ENCODE measurements at regions of chr1 and their contacts with region 1.

Region 1: DNA sequence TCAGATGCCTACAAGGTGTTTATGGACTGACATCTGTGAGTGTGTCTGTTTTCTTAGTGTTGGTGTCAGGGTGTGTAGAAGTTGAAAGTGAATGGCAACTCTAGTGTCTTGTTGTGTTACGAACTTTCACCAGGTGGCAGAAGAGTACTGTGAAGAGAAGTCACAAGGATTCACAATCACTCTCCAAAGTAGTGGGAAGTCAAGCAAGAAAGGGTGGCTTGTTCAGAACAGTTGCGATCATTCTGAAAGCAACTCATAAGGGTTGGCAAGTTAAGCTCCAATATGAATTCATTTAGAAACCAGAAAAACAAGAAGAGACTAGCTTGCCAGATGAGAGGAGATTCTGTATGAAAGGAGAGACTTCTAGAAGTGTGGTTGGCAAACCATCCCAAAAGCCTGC is 86.1 kb downstream of the FASLG start:
- DNase-seq: no peak
- ATAC-seq: peak in 3 of 4 donors; percentile 57 to 80 (median 64)
- H3K4me3 ChIP-seq: no peak overlapping the region
- H3K27ac ChIP-seq: no peak overlapping the region
- H3K4me1 ChIP-seq: no peaks in the 10 kb centered on the region
- H3K27me3 ChIP-seq: peaks cover 0 to 3% (median 0%) of the 10 kb centered on the region in 3 donors
- CTCF ChIP-seq: peak; percentile 36

Region 2: DNA sequence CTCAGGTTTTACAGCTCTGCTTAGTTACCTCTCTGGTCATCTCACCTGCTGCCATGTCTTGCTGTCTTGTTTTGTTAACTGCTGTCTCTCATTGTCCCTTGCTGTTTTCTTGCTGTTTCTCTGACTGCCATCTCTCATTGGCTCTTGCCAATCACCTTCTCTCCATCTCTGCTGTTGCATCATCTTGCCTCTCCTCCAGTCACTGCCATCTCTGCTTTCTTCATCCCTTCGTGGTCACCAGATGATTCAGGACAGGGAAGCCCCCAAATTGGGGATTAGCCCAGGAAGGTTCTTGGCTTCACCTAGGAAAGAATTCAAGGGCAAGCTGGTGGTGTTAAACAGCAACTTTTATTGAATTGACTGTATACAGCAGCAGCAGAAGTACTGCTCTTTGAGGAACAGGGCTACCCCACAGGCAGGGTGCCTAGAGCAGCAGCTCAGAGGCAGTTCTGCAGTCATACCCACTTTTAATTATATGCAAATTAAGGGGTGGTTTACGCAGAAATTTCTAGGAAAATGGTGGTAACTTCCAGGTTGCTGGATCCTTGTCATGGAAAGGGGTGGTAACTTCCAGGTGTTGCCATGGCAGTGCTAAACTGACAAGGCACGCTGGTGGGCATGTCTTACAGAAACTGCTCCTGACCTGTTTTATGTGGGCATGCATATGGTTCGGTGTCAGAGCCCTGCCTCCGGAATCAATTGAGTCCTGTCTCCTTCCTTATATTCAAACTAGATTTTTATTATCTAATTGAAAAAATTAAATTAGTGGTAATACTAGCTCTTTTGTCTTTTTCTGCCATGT is 178.6 kb before region 1 on chr1:
- intact Hi-C with region 1: no loop called
- DNase-seq: no peak
- ATAC-seq: no peak
- H3K4me3 ChIP-seq: no peak overlapping the region
- H3K27ac ChIP-seq: no peak overlapping the region
- H3K4me1 ChIP-seq: no peaks in the 10 kb centered on the region
- H3K27me3 ChIP-seq: no peaks in the 10 kb centered on the region
- CTCF ChIP-seq: no peak

Region 3: DNA sequence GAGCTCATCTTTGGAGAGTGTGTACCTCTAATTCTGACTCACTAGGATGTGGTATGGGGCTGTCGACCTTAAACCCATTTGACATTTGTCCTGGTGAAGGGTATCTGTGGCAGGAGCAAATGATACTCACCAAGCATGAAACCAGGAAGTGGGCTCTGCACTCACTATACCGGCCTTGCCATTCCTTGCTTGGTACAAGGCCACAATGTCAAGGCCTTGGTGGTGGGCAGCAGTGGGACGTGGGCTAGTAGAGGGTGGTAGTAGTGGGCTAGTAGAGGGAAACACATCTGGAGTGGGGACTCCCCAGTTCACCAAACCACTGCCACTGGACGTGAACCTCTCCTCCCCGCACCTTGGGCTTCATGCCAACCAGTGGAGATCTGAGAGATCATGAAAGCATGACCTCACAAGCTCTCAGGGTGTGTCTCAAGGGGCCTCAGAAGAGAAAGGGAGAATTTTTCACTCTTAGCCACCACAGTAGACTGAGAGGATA is 450.6 kb after region 1 on chr1:
- intact Hi-C with region 1: loop called in 1 of 2 experiments (anchors 5 kb)
- DNase-seq: no peak
- ATAC-seq: no peak
- H3K4me3 ChIP-seq: no peak overlapping the region
- H3K27ac ChIP-seq: no peak overlapping the region
- H3K4me1 ChIP-seq: peaks cover 3% of the 10 kb centered on the region
- H3K27me3 ChIP-seq: no peaks in the 10 kb centered on the region
- CTCF ChIP-seq: no peak

Region 4: GRCh38 chr1:173202430-173203145 is 457.6 kb after region 1 on chr1:
- intact Hi-C with region 1: loop called (anchors 2 to 5 kb)
- DNase-seq: no peak
- ATAC-seq: peak in 3 of 4 donors; percentile 28 to 72 (median 57)
- H3K4me3 ChIP-seq: no peak overlapping the region
- H3K27ac ChIP-seq: no peak overlapping the region
- H3K4me1 ChIP-seq: no peaks in the 10 kb centered on the region
- H3K27me3 ChIP-seq: no peaks in the 10 kb centered on the region
- CTCF ChIP-seq: peak; percentile 56

Measured in psoas muscle (tissue), 8 donors.